ENCODE measurements at regions of chr14 and their contacts with region 1.

Region 1: DNA sequence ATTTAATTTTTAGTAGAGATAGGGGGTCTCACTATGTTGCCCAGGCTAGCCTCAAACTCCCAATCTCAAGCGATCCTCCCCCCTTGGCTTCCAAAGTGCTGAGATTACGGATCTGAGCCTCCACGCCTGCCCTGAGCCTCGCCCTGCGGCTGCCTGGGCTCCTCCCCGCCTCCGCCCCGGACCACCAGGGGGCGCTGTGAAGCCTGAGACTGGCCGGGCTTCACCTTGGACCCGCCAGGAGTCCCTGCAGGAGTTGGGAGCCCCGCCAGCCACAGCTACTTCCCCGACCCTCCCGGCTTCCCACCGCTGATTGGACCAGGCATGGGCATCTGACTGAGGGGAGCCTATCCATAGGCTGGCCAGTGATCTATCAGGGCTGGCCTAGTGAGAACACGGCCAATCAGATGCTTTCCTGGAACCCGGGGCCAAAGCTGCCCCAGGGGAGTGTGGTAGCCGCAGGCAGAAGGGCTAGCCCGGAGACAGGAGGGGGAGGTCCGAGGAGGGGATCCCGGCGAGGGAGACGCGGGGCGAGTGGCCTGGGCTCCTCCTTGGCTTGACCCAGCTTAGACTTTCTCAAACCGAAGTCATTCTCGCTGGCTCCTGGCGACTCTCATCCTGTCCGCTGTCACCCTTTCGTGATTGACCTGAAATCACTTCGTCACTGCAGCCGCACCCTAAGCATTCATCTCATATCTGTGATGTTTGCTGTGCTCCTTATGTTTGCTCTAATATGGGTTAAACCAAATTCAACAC is 15.1 kb upstream of the ANKRD9 start:
- DNase-seq: peak; percentile 98 to 99
- H3K4me3 ChIP-seq: peak overlapping the region; percentile 60 to 70
- H3K27ac ChIP-seq: peak overlapping the region; percentile 69 to 72
- H3K4me1 ChIP-seq: peaks cover 0 to 15% (median 7%) of the 10 kb centered on the region in 4 donors
- H3K27me3 ChIP-seq: no peaks in the 10 kb centered on the region
- CTCF ChIP-seq: peak; percentile 96 to 97

Region 2: DNA sequence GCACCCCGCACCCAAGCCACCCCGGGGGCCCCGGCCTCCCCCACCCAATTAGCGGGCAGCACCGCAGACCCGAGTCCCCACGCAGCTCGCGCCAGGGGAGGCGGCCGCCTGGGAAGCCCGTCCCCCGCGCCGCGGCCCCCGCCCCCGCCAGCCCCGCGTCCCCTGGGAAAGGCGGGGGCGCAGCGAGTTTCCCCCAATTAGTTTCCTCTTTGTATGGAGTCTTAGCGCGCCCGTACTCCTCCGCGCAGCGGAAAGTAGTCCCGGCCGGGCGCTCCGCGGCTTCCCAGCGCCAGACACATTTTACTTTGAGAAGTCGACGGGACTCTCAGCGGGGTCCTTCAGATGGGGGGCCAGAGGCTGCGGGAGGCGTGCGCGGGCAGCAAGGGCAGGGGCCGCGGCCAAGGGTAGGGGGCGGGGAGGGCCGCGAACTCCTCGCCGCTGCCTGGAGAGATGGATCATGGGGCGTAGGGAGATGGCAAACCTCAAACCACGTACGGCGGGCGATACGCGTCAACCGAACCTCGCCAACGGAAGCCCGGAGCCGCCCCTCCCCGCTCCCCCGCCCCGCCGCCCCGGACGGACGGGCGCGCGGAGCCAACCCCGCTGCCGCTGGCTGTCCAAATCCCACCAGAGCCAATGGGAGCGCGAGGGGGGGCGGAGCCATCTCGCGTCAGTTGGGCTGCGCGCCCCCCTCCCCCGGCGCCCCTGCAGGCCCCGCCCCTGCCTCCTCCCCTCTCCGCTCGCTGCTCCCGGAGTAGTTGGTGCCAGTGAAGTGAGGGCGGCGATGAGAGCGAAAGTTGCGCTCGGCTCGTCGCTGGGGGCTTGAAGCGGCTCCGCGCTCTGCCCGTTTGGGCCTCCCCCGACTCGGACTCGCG is 67.5 kb after region 1 on chr14 and contains the start of gene RCOR1:
- intact Hi-C with region 1: loop called (anchors 5 kb)
- DNase-seq: peak; percentile 96 to 99
- H3K4me3 ChIP-seq: peak within 1 kb of the TSS; percentile 83 to 88
- H3K27ac ChIP-seq: peak within 1 kb of the TSS; percentile 93
- H3K4me1 ChIP-seq: peaks cover 0 to 35% (median 21%) of the 10 kb centered on the region in 4 donors
- H3K27me3 ChIP-seq: no peaks in the 10 kb centered on the region
- CTCF ChIP-seq: peak in 1 of 2 experiments; percentile 13

Region 3: DNA sequence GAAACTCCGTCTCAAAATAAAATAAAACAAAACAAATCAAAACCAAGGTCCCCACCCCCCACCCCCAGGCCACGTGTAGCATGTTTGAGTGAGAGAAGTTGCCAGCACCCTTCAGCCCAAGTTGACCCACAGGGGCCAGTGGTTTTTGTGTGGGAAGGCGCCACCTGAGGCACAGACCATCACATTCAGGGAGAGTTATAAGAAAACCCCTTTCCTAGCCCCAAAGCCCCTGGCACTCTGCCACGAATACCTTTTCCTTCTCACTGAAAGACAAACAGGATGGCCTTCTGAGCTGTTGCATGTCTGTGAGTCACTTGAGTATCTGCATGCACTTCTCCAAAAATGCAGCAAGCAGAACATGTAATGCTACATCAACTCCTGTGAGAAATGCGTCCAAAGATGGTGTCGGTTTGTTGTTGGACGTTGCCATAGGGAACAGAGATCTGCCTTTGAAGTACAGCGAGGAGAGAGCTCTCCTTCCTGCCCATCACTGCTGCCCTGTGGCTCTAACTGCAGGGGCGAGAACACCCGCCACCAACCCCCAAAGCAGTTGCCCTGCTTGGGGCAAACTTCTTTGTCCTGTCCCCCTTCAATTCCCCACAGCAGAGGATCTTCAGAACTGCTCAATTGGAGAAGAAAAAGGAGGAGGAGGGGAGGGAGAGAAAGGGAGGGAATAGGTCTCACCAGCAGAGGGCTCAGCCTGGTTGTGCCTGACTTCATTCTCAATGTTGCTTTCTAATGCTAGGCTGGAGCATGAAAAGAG is 249.9 kb after region 1 on chr14:
- intact Hi-C with region 1: loop called (anchors 10 kb)
- DNase-seq: peak in 1 of 2 donors; percentile 40
- H3K4me3 ChIP-seq: no peak overlapping the region
- H3K27ac ChIP-seq: peak overlapping the region in 1 of 2 donors; percentile 73
- H3K4me1 ChIP-seq: peaks cover 0 to 12% (median 8%) of the 10 kb centered on the region in 4 donors
- H3K27me3 ChIP-seq: no peaks in the 10 kb centered on the region
- CTCF ChIP-seq: peak; percentile 54 to 67

Measured in tibial artery (tissue), 4 donors.